Activated B cell treated with CpG ODN at 0.5 μM for 24 hours (primary cell): ENCODE measurements at regions of chr1 and their contacts with region 1.

Region 1: GRCh38 chr1:206030714-206031113 is 7.0 kb upstream of the CTSE start:
- DNase-seq: peak; percentile 56
- ATAC-seq: peak; percentile 79
- H3K4me3 Mint-ChIP-seq: no peak overlapping the region
- H3K27ac Mint-ChIP-seq: peak overlapping the region; percentile 72
- H3K4me1 Mint-ChIP-seq: peaks cover 51% of the 10 kb centered on the region
- H3K27me3 Mint-ChIP-seq: no peaks in the 10 kb centered on the region
- CTCF ChIP-seq: peak; percentile 75

Region 2: GRCh38 chr1:205750138-205751035 is 280.3 kb before region 1 on chr1 and contains the start of gene NUCKS1:
- CTCF ChIA-PET with region 1: no interaction called
- POLR2A ChIA-PET with region 1: no interaction called
- intact Hi-C with region 1: no loop called
- DNase-seq: peak; percentile 86
- ATAC-seq: peak; percentile 80
- H3K4me3 Mint-ChIP-seq: peak within 1 kb of the TSS; percentile 96
- H3K27ac Mint-ChIP-seq: peak within 1 kb of the TSS; percentile 98
- H3K4me1 Mint-ChIP-seq: peaks cover 43% of the 10 kb centered on the region
- H3K27me3 Mint-ChIP-seq: no peaks in the 10 kb centered on the region
- CTCF ChIP-seq: no peak
- total RNA-seq, gene NUCKS1: 113 and 130 TPM in 2 replicates

Region 3: GRCh38 chr1:205919026-205919746 is 111.5 kb before region 1 on chr1:
- CTCF ChIA-PET with region 1: interaction called, 7 read pairs
- POLR2A ChIA-PET with region 1: no interaction called
- intact Hi-C with region 1: loop called (anchors 2 kb)
- DNase-seq: peak; percentile 58
- ATAC-seq: peak; percentile 93
- H3K4me3 Mint-ChIP-seq: no peak overlapping the region
- H3K27ac Mint-ChIP-seq: no peak overlapping the region
- H3K4me1 Mint-ChIP-seq: no peaks in the 10 kb centered on the region
- H3K27me3 Mint-ChIP-seq: peaks cover 5% of the 10 kb centered on the region
- CTCF ChIP-seq: no peak

Region 4: GRCh38 chr1:205983925-205984725 is 46.6 kb before region 1 on chr1:
- CTCF ChIA-PET with region 1: interaction called, 60 read pairs
- POLR2A ChIA-PET with region 1: interaction called, 4 read pairs
- intact Hi-C with region 1: loop called (anchors 1 kb)
- DNase-seq: peak; percentile 39
- ATAC-seq: peak; percentile 93
- H3K4me3 Mint-ChIP-seq: no peak overlapping the region
- H3K27ac Mint-ChIP-seq: no peak overlapping the region
- H3K4me1 Mint-ChIP-seq: peaks cover 2% of the 10 kb centered on the region
- H3K27me3 Mint-ChIP-seq: no peaks in the 10 kb centered on the region
- CTCF ChIP-seq: no peak

Region 5: DNA sequence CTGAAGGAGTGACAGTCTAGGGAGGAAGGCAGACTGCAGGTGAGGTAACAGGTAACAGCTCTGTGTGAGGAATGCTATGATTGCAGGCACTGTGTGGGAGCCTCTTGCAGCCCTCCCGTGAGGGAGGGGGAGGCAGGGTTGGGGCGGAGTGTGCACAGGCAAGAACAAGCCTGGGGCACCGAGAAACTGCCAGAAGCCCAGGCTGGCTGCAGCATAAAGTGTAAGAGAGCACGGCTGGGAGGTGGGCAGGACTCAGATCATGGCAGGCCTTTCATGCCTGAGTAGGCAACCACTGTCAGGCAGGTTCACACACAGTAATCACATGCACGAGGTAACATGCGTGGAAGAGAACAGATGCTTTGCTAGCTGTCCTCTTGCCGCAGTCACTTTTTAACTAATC is 10.9 kb after region 1 on chr1:
- CTCF ChIA-PET with region 1: interaction called, 30 read pairs
- POLR2A ChIA-PET with region 1: interaction called, 67 read pairs
- intact Hi-C with region 1: loop called (anchors 1 kb)
- DNase-seq: peak; percentile 36
- ATAC-seq: peak; percentile 90
- H3K4me3 Mint-ChIP-seq: peak overlapping the region; percentile 76
- H3K27ac Mint-ChIP-seq: peak overlapping the region; percentile 89
- H3K4me1 Mint-ChIP-seq: peaks cover 81% of the 10 kb centered on the region
- H3K27me3 Mint-ChIP-seq: no peaks in the 10 kb centered on the region
- CTCF ChIP-seq: no peak

Region 6: GRCh38 chr1:206059355-206059915 is 28.7 kb after region 1 on chr1:
- CTCF ChIA-PET with region 1: interaction called, 18 read pairs
- POLR2A ChIA-PET with region 1: interaction called, 6 read pairs
- intact Hi-C with region 1: no loop called
- DNase-seq: no peak
- ATAC-seq: no peak
- H3K4me3 Mint-ChIP-seq: peak overlapping the region; percentile 44
- H3K27ac Mint-ChIP-seq: peak overlapping the region; percentile 84
- H3K4me1 Mint-ChIP-seq: peaks cover 76% of the 10 kb centered on the region
- H3K27me3 Mint-ChIP-seq: no peaks in the 10 kb centered on the region
- CTCF ChIP-seq: no peak

Region 7: GRCh38 chr1:206080026-206080820 is 49.5 kb after region 1 on chr1:
- CTCF ChIA-PET with region 1: interaction called, 28 read pairs
- POLR2A ChIA-PET with region 1: interaction called, 8 read pairs
- intact Hi-C with region 1: no loop called
- DNase-seq: no peak
- ATAC-seq: no peak
- H3K4me3 Mint-ChIP-seq: no peak overlapping the region
- H3K27ac Mint-ChIP-seq: peak overlapping the region; percentile 10
- H3K4me1 Mint-ChIP-seq: peaks cover 39% of the 10 kb centered on the region
- H3K27me3 Mint-ChIP-seq: no peaks in the 10 kb centered on the region
- CTCF ChIP-seq: no peak

Region 8: GRCh38 chr1:206106328-206107167 is 75.8 kb after region 1 on chr1:
- CTCF ChIA-PET with region 1: interaction called, 342 read pairs
- POLR2A ChIA-PET with region 1: interaction called, 23 read pairs
- intact Hi-C with region 1: loop called (anchors 1 kb)
- DNase-seq: peak; percentile 71
- ATAC-seq: peak; percentile 89
- H3K4me3 Mint-ChIP-seq: no peak overlapping the region
- H3K27ac Mint-ChIP-seq: peak overlapping the region; percentile 73
- H3K4me1 Mint-ChIP-seq: peaks cover 34% of the 10 kb centered on the region
- H3K27me3 Mint-ChIP-seq: no peaks in the 10 kb centered on the region
- CTCF ChIP-seq: peak; percentile 70